Activated CD4-positive, alpha-beta T cell treated with anti-CD3 and anti-CD28 coated beads for 36 hours (primary cell): ENCODE measurements at regions of chr7 and their contacts with region 1.

Region 1: GRCh38 chr7:111098011-111098925 is 7.3 kb downstream of the LRRN3 start:
- DNase-seq: peak; percentile 79
- ATAC-seq: peak; percentile 69
- H3K4me3 Mint-ChIP-seq: peak overlapping the region; percentile 59
- H3K27ac Mint-ChIP-seq: peak overlapping the region; percentile 76
- H3K4me1 Mint-ChIP-seq: peaks cover 59% of the 10 kb centered on the region
- H3K27me3 Mint-ChIP-seq: no peaks in the 10 kb centered on the region

Region 2: GRCh38 chr7:109844362-109844761 is 1253.9 kb before region 1 on chr7:
- CTCF ChIA-PET with region 1: interaction called, 7 read pairs
- POLR2A ChIA-PET with region 1: no interaction called
- intact Hi-C with region 1: loop called in 1 of 2 experiments (anchors 2 kb)
- DNase-seq: no peak
- ATAC-seq: no peak
- H3K4me3 Mint-ChIP-seq: no peak overlapping the region
- H3K27ac Mint-ChIP-seq: no peak overlapping the region
- H3K4me1 Mint-ChIP-seq: no peaks in the 10 kb centered on the region
- H3K27me3 Mint-ChIP-seq: no peaks in the 10 kb centered on the region

Region 3: DNA sequence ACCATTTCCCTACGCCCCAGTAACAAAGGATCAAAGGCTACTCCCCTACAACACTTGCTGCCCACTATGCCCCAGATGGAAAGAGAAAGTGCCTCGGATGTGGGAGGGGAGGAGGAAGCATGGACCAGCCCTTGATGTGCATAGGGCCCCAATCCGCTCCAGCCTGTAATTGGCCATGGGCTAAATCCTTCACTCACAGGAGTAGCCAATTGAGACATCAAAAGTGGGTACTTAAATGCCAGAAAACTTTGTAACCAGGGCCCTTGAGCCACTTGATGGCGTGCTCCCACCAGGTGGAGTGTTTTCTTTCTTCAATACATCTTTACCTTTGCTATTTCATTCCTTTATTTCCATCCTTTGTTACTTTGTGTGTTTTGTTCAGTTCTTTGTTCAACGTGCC is 507.9 kb before region 1 on chr7:
- CTCF ChIA-PET with region 1: interaction called, 5 read pairs
- POLR2A ChIA-PET with region 1: no interaction called
- intact Hi-C with region 1: loop called (anchors 1 kb)
- DNase-seq: peak; percentile 9
- ATAC-seq: no peak
- H3K4me3 Mint-ChIP-seq: no peak overlapping the region
- H3K27ac Mint-ChIP-seq: no peak overlapping the region
- H3K4me1 Mint-ChIP-seq: no peaks in the 10 kb centered on the region
- H3K27me3 Mint-ChIP-seq: no peaks in the 10 kb centered on the region

Region 4: GRCh38 chr7:111083413-111083812 is 14.9 kb before region 1 on chr7:
- CTCF ChIA-PET with region 1: interaction called, 20 read pairs
- POLR2A ChIA-PET with region 1: interaction called, 3 read pairs
- intact Hi-C with region 1: no loop called
- DNase-seq: peak; percentile 60
- ATAC-seq: peak; percentile 84
- H3K4me3 Mint-ChIP-seq: peak overlapping the region; percentile 49
- H3K27ac Mint-ChIP-seq: peak overlapping the region; percentile 89
- H3K4me1 Mint-ChIP-seq: peaks cover 78% of the 10 kb centered on the region
- H3K27me3 Mint-ChIP-seq: no peaks in the 10 kb centered on the region

Region 5: DNA sequence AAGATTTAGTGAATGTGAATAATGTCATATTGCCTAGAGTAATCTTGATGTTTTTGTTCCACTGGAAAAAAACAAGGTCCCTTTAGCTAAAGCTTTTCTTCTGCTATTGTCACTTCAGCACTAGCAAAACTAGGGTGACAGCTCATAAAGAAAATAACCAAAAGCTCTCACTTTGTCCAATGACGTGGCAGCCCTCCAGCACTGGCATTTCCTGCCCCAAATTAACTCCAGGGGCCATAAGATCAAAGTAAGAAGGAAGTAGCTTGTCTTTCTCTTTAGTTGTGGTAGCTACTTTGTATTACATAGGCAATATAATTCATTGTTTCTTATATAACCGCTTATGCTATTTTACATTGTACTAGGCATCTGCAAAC is 39.9 kb after region 1 on chr7:
- CTCF ChIA-PET with region 1: interaction called, 11 read pairs
- POLR2A ChIA-PET with region 1: interaction called, 4 read pairs
- intact Hi-C with region 1: loop called (anchors 2 to 5 kb)
- DNase-seq: peak; percentile 83
- ATAC-seq: peak; percentile 96
- H3K4me3 Mint-ChIP-seq: peak overlapping the region; percentile 53
- H3K27ac Mint-ChIP-seq: peak overlapping the region; percentile 93
- H3K4me1 Mint-ChIP-seq: peaks cover 33% of the 10 kb centered on the region
- H3K27me3 Mint-ChIP-seq: no peaks in the 10 kb centered on the region